Colonic mucosa (tissue), 4 donors: ENCODE measurements at regions of chr3 and their contacts with region 1.

Region 1: DNA sequence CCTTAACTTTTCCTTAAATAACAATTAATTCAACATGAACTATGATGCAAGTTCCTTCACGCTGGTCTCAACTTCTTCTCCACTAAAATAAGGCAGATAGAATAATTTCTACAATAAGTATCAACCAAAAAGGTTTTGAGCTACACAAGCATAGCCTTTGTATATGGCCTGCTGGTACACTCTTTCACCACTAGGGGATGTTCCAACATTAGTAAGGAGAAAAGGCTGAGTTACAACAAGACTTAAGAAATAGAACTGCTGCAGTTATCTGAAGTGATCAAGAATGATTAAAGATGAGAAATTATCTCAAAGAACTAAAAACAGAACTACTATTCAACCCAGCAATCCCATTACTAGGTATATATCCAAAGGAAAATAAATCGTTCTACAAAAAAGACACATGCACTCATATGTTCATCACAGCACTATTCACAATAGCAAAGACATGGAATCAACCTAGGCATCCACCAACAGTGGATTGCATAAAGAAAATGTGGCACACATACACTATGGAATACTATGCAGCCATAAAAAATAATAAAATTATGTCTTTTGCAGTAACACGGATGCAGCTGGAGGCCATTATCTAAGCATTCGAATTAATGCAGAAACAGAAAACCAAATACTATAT is 14.4 kb downstream of the ATP13A3 start:
- DNase-seq: no peak
- H3K4me3 ChIP-seq: no peak overlapping the region
- H3K27ac ChIP-seq: no peak overlapping the region
- H3K4me1 ChIP-seq: no peaks in the 10 kb centered on the region
- H3K27me3 ChIP-seq: no peaks in the 10 kb centered on the region
- CTCF ChIP-seq: peak; percentile 97

Region 2: GRCh38 chr3:194556086-194557056 is 84.0 kb after region 1 on chr3:
- intact Hi-C with region 1: no loop called
- DNase-seq: no peak
- H3K4me3 ChIP-seq: peak overlapping the region; percentile 3
- H3K27ac ChIP-seq: no peak overlapping the region
- H3K4me1 ChIP-seq: no peaks in the 10 kb centered on the region
- H3K27me3 ChIP-seq: no peaks in the 10 kb centered on the region
- CTCF ChIP-seq: no peak

Region 3: GRCh38 chr3:194598771-194599557 is 126.6 kb after region 1 on chr3:
- intact Hi-C with region 1: loop called (anchors 5 kb)
- DNase-seq: no peak
- H3K4me3 ChIP-seq: no peak overlapping the region
- H3K27ac ChIP-seq: no peak overlapping the region
- H3K4me1 ChIP-seq: no peaks in the 10 kb centered on the region
- H3K27me3 ChIP-seq: no peaks in the 10 kb centered on the region
- CTCF ChIP-seq: no peak